Mammary epithelial cell (primary cell): ENCODE measurements at regions of chr6 and their contacts with region 1.

Region 1: DNA sequence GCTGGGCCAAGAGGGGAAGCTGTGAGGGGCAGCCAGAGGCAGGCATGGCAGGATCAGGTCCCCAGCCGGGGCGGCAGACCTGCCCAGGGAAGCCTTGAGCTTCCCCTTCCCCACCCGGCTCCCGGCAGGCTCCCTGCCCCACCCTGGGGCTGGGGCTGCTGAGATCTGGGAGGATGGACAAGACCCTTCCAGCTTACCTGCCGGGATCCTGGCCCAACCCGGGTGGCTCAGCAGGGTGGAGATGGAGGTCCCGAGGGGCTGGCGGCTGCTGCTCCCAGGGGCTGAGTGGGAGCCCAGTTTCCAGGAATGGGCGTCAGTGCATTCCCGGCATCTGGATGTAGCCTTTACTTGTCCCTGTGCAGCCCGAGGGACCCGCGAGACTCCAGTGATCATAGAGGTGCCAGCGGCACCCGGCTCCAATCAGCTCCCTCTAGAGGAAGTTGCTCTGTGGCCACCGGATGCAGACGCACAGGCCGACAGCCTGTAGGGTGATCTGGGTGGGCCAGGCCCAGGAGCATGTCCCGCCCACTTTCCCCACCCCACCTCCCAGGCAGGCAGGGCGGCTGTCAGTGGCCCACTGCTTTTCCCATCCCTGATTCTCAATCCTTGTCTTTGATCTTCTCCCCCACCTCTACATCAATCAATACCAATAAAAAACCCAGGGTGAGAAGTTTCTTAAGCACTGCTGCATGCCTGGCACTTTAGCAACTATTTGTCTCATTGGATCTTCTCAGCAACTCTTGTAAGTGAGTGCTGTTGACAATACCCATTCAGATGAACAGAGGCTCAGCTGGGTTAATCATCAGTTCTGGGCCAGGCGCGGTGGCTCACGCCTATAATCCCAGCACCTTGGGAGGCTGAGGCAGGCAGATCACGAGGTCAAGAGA is at the start of gene BAK1:
- DNase-seq: peak; percentile 83
- H3K4me3 ChIP-seq: peak within 1 kb of the TSS; percentile 81 to 89 (median 86)
- H3K27ac ChIP-seq: peak within 1 kb of the TSS; percentile 67
- H3K4me1 ChIP-seq: peaks cover 28% of the 10 kb centered on the region
- H3K27me3 ChIP-seq: no peaks in the 10 kb centered on the region
- CTCF ChIP-seq: peak; percentile 11 to 65
- total RNA-seq, gene BAK1: 41.0 to 70.6 TPM

Region 2: GRCh38 chr6:33040157-33040556 is 539.9 kb before region 1 on chr6:
- CTCF ChIA-PET with region 1: no interaction called
- dilution Hi-C with region 1: no loop called
- in situ Hi-C with region 1: no loop called
- intact Hi-C with region 1: no loop called
- DNase-seq: no peak
- H3K4me3 ChIP-seq: no peak overlapping the region
- H3K27ac ChIP-seq: no peak overlapping the region
- H3K4me1 ChIP-seq: no peaks in the 10 kb centered on the region
- H3K27me3 ChIP-seq: no peaks in the 10 kb centered on the region
- CTCF ChIP-seq: no peak

Region 3: DNA sequence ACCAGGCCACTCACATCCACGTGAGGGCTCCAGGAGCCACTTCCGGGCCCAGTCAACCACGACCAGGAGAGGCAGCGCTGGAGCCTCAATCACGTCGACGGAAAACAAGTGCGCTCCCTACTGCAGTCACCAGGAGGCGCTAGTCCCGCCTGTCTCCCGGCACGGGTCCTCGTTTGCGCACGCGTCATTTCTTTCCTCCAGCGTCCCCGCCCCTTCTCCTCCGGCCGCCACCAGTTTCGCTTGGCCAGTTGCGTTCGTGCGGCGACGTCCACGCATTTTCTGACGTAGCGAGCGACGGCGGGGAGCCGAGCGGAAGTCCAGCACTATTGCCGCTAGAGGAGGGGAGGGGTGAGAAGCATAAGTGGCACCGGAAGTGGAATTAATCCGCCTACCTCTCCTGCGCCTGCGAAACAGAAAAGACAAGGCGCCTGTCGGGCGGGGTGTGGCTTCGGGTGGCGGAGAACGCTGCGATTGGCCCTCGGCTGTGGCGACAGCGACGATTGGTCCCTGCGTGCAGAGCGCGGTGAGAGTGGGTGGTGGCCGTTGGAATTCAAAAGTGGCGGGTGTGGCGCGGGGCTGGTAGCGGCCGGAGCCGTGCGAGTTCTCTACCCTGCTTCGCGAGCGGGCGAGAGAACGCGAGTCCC is 188.7 kb before region 1 on chr6 and contains the start of gene KIFC1:
- CTCF ChIA-PET with region 1: no interaction called
- dilution Hi-C with region 1: no loop called
- in situ Hi-C with region 1: no loop called
- intact Hi-C with region 1: loop called (anchors 2 kb)
- DNase-seq: peak; percentile 100
- H3K4me3 ChIP-seq: peak within 1 kb of the TSS; percentile 67 to 93 (median 91)
- H3K27ac ChIP-seq: peak within 1 kb of the TSS; percentile 88
- H3K4me1 ChIP-seq: peaks cover 37% of the 10 kb centered on the region
- H3K27me3 ChIP-seq: no peaks in the 10 kb centered on the region
- CTCF ChIP-seq: peak; percentile 88 to 94
- total RNA-seq, gene KIFC1: 2.8 to 36.7 TPM

Region 4: DNA sequence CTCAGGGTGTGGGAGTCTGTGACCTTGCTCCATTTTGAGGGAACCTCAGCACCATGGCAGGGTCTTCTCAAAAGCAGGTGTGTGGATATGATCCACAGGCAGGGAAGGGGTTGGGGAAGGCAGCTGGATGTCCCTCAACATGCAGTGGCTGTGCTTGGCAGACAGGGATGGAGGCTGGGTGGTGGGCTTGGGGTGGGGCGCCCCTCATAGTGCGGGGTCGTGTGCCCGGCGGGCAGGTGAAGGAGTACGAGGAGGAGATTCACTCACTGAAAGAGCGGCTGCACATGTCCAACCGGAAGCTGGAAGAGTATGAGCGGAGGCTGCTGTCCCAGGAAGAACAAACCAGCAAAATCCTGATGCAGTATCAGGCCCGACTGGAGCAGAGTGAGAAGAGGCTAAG is 133.7 kb before region 1 on chr6:
- CTCF ChIA-PET with region 1: interaction called, 13 read pairs
- dilution Hi-C with region 1: no loop called
- in situ Hi-C with region 1: no loop called
- intact Hi-C with region 1: no loop called
- DNase-seq: no peak
- H3K4me3 ChIP-seq: no peak overlapping the region
- H3K27ac ChIP-seq: no peak overlapping the region
- H3K4me1 ChIP-seq: no peaks in the 10 kb centered on the region
- H3K27me3 ChIP-seq: no peaks in the 10 kb centered on the region
- CTCF ChIP-seq: no peak

Region 5: DNA sequence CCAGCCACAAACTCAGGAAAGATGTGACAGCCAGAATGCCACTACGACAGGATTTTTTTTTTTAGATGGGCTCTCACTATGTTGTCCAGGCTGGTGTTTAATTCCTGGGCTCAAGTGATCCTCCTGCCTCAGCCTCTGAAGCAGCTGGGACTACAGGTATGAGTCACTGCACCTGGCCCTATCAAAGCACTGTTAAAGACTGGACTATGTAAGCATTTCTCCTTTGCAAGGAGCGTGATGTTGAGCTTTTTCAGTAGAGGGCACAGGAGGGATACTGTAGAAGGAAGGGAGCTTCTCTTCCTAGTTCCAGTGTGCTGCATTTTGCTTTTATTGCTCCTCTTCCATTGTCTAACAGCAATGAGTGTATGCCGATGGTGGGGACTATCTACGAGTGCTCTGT is 89.9 kb before region 1 on chr6:
- CTCF ChIA-PET with region 1: no interaction called
- dilution Hi-C with region 1: no loop called
- in situ Hi-C with region 1: no loop called
- intact Hi-C with region 1: loop called (anchors 5 kb)
- DNase-seq: peak; percentile 20
- H3K4me3 ChIP-seq: no peak overlapping the region
- H3K27ac ChIP-seq: no peak overlapping the region
- H3K4me1 ChIP-seq: no peaks in the 10 kb centered on the region
- H3K27me3 ChIP-seq: no peaks in the 10 kb centered on the region
- CTCF ChIP-seq: no peak

Region 6: DNA sequence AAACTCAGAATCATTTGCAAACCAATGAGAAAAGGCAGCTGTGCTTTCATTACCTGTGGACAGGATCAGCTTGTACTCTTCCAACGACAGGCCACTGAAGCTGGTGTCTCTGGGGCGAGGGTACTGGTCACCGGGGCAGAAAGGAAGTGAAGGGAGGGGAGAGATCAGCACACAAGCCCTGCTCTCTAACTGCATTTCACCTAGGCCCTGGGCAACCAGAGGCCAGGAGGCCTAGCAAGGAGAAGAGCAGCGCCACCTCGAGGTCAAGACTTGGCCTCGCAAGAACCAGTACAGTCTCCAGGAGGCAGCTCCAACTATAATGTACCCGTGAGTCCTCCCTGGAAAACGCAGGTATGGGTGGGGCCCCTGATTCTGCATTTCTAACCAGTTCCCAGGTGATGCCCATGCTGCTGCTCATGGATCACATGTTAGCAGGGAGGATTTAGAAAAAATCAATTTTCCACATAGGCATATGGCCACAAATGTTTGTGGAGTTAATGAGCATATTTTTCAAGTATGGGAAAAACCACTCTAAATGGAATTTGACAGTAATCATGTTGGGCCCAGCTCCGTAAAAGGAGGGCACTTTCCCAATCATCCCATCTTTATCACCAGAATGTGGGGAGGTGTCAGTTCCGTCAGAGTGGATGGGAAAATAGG is 120.5 kb after region 1 on chr6:
- CTCF ChIA-PET with region 1: no interaction called
- dilution Hi-C with region 1: no loop called
- in situ Hi-C with region 1: loop called (anchors 5 to 10 kb)
- intact Hi-C with region 1: loop called (anchors 1 kb)
- DNase-seq: peak; percentile 74
- H3K4me3 ChIP-seq: no peak overlapping the region
- H3K27ac ChIP-seq: no peak overlapping the region
- H3K4me1 ChIP-seq: peaks cover 26% of the 10 kb centered on the region
- H3K27me3 ChIP-seq: no peaks in the 10 kb centered on the region
- CTCF ChIP-seq: peak; percentile 74 to 90

Region 7: GRCh38 chr6:33744001-33744848 is 164.2 kb after region 1 on chr6:
- CTCF ChIA-PET with region 1: no interaction called
- dilution Hi-C with region 1: no loop called
- in situ Hi-C with region 1: loop called in 1 of 2 experiments (anchors 10 kb)
- intact Hi-C with region 1: no loop called
- DNase-seq: peak; percentile 96
- H3K4me3 ChIP-seq: no peak overlapping the region
- H3K27ac ChIP-seq: no peak overlapping the region
- H3K4me1 ChIP-seq: peaks cover 35% of the 10 kb centered on the region
- H3K27me3 ChIP-seq: no peaks in the 10 kb centered on the region
- CTCF ChIP-seq: peak; percentile 96 to 97

Region 8: DNA sequence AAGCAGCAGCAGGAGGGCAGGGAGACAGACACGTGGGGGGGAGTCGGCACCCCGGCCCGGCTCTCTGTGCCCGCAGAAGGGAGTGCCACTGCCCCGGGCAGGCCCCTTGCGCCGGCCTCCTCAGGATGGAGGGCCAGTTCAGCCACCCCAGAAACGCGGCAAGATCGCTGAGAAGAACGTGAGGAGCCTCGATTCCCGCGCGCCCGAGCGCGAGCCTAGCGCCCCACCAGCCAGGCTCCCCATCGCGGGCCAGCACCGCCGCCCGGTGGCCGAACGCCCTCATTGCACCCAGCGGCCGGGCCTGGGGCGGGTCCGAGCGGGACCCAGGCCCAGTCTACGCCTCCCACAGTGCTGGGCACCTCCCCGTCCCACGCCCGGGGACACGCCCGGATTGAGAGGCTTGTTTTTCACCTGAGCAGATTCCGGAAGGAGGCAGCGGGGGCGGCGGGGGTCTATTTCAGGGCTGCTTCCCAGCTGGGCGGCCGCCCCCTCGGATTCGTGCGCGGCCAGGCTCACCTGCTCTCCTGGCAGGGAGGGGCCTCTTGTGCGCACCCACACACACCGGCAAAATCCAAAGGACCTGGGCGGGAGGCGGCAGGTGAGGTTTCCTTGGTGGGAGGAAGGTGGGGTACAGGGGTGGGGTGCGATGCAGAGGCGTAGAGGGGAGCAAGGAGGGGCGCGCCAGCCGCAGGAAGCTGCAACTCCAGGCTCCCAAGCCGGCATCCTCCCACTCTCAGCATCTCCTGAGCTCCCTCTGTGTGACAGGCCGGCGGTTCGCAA is 574.8 kb after region 1 on chr6:
- CTCF ChIA-PET with region 1: no interaction called
- dilution Hi-C with region 1: no loop called
- in situ Hi-C with region 1: loop called in 1 of 2 experiments (anchors 25 kb)
- intact Hi-C with region 1: loop called (anchors 1 kb)
- DNase-seq: no peak
- H3K4me3 ChIP-seq: peak overlapping the region in 1 of 3 experiments; percentile 34
- H3K27ac ChIP-seq: no peak overlapping the region
- H3K4me1 ChIP-seq: peaks cover 8% of the 10 kb centered on the region
- H3K27me3 ChIP-seq: peaks cover 5% of the 10 kb centered on the region
- CTCF ChIP-seq: peak; percentile 86 to 99